Mammary epithelial cell (primary cell): ENCODE measurements at regions of chr6 and their contacts with region 1.

Region 1: DNA sequence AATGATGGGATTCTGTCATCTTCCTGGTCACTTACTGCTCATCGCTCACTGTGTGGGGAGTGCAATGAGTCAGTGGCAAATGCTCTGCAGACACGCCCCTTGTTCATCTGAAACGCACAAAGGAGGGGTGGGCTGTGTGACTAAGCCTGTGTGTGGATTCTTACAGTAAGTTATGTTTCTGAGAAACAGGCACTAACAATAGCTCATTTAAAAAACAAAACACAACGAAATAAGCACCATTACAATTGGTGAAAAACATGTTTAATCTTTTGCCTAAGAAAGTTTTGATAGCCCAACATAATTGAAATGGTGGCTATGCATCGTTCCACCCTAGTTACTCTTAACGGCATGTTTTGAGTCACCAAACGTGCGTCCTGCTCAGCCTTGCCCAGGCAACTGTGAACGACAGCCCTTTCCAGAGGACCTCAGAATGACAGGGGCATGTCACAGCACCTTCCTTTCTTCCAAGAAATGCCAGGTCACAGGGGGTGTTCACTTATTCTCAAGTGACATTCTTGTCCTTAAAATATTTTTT is 118.4 kb upstream of the SGK1 start:
- DNase-seq: peak; percentile 97
- H3K4me3 ChIP-seq: peak overlapping the region in 1 of 3 experiments; percentile 8
- H3K27ac ChIP-seq: peak overlapping the region; percentile 98
- H3K4me1 ChIP-seq: peaks cover 33% of the 10 kb centered on the region
- H3K27me3 ChIP-seq: no peaks in the 10 kb centered on the region
- CTCF ChIP-seq: no peak

Region 2: DNA sequence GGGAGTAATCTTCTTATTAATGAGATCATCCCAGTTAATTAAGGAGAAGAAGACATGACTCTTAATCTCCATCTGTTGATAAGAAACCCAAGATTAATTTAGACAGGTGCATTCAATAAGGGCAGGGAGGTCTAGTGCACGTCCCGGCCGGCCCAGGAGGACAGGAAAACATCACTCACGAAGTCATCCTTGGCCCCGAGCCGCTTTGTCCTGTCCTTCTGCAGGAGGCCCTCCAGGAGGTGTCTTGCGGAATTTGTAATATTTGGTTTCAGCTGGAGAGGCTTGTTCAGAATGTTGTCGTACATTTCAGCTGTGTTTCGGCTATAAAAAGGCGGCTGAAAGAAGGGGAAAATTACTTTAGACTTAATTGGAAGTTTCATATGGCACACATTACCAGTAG is 265.5 kb before region 1 on chr6:
- CTCF ChIA-PET with region 1: no interaction called
- dilution Hi-C with region 1: no loop called
- in situ Hi-C with region 1: no loop called
- intact Hi-C with region 1: no loop called
- DNase-seq: peak; percentile 44
- H3K4me3 ChIP-seq: peak overlapping the region; percentile 52 to 99 (median 97)
- H3K27ac ChIP-seq: peak overlapping the region; percentile 94
- H3K4me1 ChIP-seq: peaks cover 23% of the 10 kb centered on the region
- H3K27me3 ChIP-seq: no peaks in the 10 kb centered on the region
- CTCF ChIP-seq: peak; percentile 10 to 21

Region 3: DNA sequence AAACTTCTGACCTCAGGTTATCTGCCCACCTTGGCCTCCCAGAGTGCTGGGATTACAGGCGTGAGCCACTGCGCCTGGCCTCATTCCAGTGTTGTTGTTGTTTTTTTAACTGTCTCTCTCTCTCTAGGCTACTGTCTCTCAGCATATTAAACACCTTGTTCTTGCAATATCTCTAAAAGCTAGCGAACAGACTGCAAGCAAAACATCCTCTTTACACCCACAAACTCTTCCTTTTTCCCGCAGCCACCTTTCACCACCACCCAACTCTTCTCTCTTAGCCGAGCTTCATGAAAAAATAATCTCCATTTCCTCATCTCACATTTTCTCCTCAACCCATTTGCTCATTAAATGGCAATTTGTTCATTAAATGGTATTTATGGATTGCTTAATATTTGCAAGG is 164.0 kb before region 1 on chr6:
- CTCF ChIA-PET with region 1: no interaction called
- dilution Hi-C with region 1: no loop called
- in situ Hi-C with region 1: no loop called
- intact Hi-C with region 1: loop called (anchors 1 kb)
- DNase-seq: no peak
- H3K4me3 ChIP-seq: no peak overlapping the region
- H3K27ac ChIP-seq: no peak overlapping the region
- H3K4me1 ChIP-seq: peaks cover 6% of the 10 kb centered on the region
- H3K27me3 ChIP-seq: no peaks in the 10 kb centered on the region
- CTCF ChIP-seq: no peak

Region 4: GRCh38 chr6:134464690-134465411 is 28.5 kb after region 1 on chr6:
- CTCF ChIA-PET with region 1: no interaction called
- dilution Hi-C with region 1: no loop called
- in situ Hi-C with region 1: no loop called
- intact Hi-C with region 1: loop called (anchors 1 kb)
- DNase-seq: peak; percentile 93
- H3K4me3 ChIP-seq: no peak overlapping the region
- H3K27ac ChIP-seq: peak overlapping the region; percentile 95
- H3K4me1 ChIP-seq: peaks cover 39% of the 10 kb centered on the region
- H3K27me3 ChIP-seq: no peaks in the 10 kb centered on the region
- CTCF ChIP-seq: no peak